ENCODE measurements at regions of chr1 and their contacts with region 1.

Region 1: DNA sequence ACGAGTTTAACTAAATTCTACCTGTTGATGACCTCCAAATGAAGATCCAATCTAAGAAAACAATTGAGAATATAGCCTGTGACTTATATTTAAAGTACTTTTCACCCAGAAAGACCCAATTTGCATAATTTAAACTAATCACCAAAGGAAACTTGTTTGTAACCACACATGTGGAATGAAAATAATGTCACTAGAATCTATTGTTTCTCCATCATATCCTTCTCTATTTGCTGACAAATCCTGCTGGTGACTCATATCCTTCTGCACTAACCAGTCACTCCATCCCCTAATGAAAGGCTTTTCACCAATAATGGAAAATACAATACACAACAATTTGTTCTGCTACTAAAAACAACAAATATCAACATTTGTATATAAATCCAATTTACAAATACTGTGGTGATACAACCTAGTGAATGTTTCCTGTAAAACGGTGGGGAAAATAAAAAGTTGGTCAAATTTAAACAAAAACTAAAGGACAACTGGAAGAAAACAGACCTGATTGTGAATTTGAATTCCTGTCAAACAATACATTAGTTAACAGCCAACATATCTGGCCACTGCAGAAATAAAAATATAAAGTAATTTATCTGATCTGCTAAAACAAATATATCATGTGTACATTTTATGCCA is 6.5 kb downstream of the PTP4A2 start:
- DNase-seq: peak in 1 of 9 experiments; percentile 59
- ATAC-seq: no peak
- H3K4me3 ChIP-seq: peak overlapping the region in 1 of 2 experiments; percentile 37
- H3K4me3 Mint-ChIP-seq: peak overlapping the region; percentile 75
- H3K27ac ChIP-seq: peak overlapping the region in 1 of 2 experiments; percentile 85
- H3K27ac Mint-ChIP-seq: peak overlapping the region; percentile 99
- H3K4me1 ChIP-seq: peaks cover 95% of the 10 kb centered on the region
- H3K4me1 Mint-ChIP-seq: peaks cover 86% of the 10 kb centered on the region
- H3K27me3 ChIP-seq: no peaks in the 10 kb centered on the region
- H3K27me3 Mint-ChIP-seq: no peaks in the 10 kb centered on the region
- CTCF ChIP-seq: no peak

Region 2: GRCh38 chr1:31531177-31531999 is 400.3 kb before region 1 on chr1:
- CTCF ChIA-PET with region 1: no interaction called
- POLR2A ChIA-PET with region 1: no interaction called
- intact Hi-C with region 1: no loop called
- DNase-seq: no peak
- ATAC-seq: no peak
- H3K4me3 ChIP-seq: no peak overlapping the region
- H3K4me3 Mint-ChIP-seq: no peak overlapping the region
- H3K27ac ChIP-seq: no peak overlapping the region
- H3K27ac Mint-ChIP-seq: no peak overlapping the region
- H3K4me1 ChIP-seq: peaks cover 11% of the 10 kb centered on the region
- H3K4me1 Mint-ChIP-seq: peaks cover 12% of the 10 kb centered on the region
- H3K27me3 ChIP-seq: no peaks in the 10 kb centered on the region
- H3K27me3 Mint-ChIP-seq: peaks cover 11% of the 10 kb centered on the region
- CTCF ChIP-seq: no peak

Region 3: DNA sequence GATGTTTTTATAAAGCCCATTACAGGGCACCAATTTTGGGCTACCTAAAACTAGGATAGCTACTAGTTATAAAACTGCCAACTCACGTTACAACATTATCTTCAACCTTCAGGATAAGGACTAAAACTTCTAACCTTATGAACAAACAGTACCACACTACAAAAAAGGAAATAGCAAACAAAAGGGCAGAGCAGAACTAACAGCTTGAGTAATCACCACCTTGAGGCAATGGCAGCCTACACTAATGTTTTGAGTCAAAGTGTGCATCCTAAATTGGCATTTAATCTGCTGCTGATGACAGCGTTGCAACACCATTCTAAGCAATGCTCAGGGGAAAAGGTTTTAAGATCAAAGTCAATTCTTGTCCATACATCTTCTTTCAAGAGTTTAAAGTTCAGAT is 20.8 kb before region 1 on chr1:
- CTCF ChIA-PET with region 1: interaction called, 3 read pairs
- POLR2A ChIA-PET with region 1: interaction called, 7 read pairs
- intact Hi-C with region 1: loop called in 1 of 2 experiments (anchors 2 kb)
- DNase-seq: no peak
- ATAC-seq: peak; percentile 38
- H3K4me3 ChIP-seq: no peak overlapping the region
- H3K4me3 Mint-ChIP-seq: peak overlapping the region; percentile 2
- H3K27ac ChIP-seq: peak overlapping the region in 1 of 2 experiments; percentile 0
- H3K27ac Mint-ChIP-seq: peak overlapping the region; percentile 64
- H3K4me1 ChIP-seq: peaks cover 23% of the 10 kb centered on the region
- H3K4me1 Mint-ChIP-seq: peaks cover 50% of the 10 kb centered on the region
- H3K27me3 ChIP-seq: no peaks in the 10 kb centered on the region
- H3K27me3 Mint-ChIP-seq: no peaks in the 10 kb centered on the region
- CTCF ChIP-seq: no peak